Activated T-helper 1 cell treated with anti-CD3 and anti-CD28 coated beads, Interleukin-12 subunit alpha, Interleukin-12 subunit beta, Interleukin-2, Interleukin-4 antibody, amounts not matched to agents 30 ng/mL and 10 ng/mL and 1 ng/mL, durations not matched to agents 14 hours and 24 hours and 36 hours (primary cell): ENCODE measurements at regions of chr14 and their contacts with region 1.

Region 1: DNA sequence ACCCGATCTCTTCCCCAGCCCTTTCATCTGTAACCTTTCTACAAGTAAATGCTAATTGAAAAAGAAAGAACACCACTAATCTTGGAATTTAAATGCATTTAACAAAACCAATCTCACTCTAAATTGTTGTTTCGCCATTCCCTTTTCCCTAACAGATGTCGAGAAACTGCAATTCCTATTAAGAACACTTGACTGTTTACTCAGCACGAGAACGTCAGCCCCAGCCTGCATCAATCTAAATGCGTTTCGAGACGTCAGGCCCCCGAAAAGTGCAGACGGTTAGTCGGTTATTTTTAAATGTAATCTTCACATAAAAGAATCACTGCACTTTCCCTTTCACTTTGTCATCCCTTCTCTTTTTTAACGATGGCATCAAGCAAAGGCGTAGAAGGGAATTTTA is 837.6 kb downstream of the VRK1 start:
- DNase-seq: no peak
- H3K4me3 Mint-ChIP-seq: peak overlapping the region; percentile 86
- H3K27ac Mint-ChIP-seq: peak overlapping the region; percentile 49
- H3K4me1 Mint-ChIP-seq: peaks cover 53% of the 10 kb centered on the region
- H3K27me3 Mint-ChIP-seq: peaks cover 4% of the 10 kb centered on the region

Region 2: GRCh38 chr14:97177015-97177414 is 457.7 kb before region 1 on chr14:
- intact Hi-C with region 1: loop called (anchors 5 kb)
- DNase-seq: no peak
- H3K4me3 Mint-ChIP-seq: no peak overlapping the region
- H3K27ac Mint-ChIP-seq: no peak overlapping the region
- H3K4me1 Mint-ChIP-seq: peaks cover 18% of the 10 kb centered on the region
- H3K27me3 Mint-ChIP-seq: peaks cover 2% of the 10 kb centered on the region

Region 3: DNA sequence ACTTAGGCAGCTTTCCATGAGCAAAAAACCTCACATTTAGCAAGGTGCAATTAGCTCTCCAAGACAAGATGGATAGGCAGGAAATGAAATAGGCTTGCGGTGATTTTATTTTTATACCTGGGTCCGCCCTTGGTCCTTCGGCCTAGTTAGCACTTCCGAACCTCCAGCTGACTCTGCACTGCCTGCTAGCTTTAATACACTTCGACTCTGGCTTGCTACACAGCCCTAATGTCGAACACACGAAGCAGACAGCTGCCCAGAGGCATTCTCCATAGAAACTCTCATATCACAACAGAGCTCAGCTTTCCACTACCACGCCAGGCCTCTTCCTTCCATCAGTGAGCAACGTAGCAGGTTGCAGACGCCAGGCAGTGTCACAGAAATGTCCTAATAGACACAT is 149.6 kb before region 1 on chr14:
- intact Hi-C with region 1: no loop called
- DNase-seq: no peak
- H3K4me3 Mint-ChIP-seq: no peak overlapping the region
- H3K27ac Mint-ChIP-seq: no peak overlapping the region
- H3K4me1 Mint-ChIP-seq: peaks cover 11% of the 10 kb centered on the region
- H3K27me3 Mint-ChIP-seq: peaks cover 4% of the 10 kb centered on the region

Region 4: DNA sequence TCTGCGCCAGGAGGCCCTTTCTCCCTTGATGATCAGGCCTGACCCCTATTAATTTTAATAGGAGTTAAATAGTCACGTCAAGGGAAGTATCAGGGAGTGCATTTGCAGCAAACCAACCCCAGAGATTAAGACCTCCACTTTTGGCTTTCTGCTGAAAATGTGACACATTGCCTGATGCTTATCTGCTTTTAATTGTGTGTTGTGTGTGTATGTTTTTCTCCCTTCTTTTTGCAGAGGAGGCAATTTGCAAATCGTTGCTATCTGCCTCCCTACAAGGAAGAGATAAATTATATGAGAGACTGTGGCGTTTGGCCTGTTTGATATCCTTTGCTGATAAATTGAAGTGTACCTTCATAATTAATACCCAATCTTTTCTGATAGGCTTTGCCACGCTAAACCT is 14.7 kb before region 1 on chr14:
- intact Hi-C with region 1: loop called (anchors 2 kb)
- DNase-seq: no peak
- H3K4me3 Mint-ChIP-seq: peak overlapping the region; percentile 79
- H3K27ac Mint-ChIP-seq: peak overlapping the region; percentile 56
- H3K4me1 Mint-ChIP-seq: peaks cover 47% of the 10 kb centered on the region
- H3K27me3 Mint-ChIP-seq: peaks cover 4% of the 10 kb centered on the region

Region 5: DNA sequence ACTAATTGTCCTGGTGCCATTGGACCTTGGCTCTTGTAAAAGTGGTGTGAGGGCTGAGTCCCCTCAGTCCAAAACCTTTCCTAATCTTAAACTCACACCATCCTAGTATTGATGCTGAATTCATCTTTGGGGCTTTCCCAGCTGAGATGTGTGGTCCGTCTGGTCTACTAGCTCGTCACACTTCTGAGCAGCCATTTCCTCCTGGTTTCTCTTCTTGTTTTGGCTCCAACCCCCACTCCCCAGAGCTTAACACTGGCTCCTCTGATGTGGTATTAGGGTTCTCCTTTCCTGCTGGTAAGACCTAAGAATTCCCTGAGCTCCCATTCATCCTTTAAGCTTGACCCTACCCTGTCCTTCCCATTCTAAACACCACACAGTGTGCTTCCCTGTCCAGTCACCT is 63.0 kb after region 1 on chr14:
- intact Hi-C with region 1: loop called (anchors 2 kb)
- DNase-seq: peak; percentile 55
- H3K4me3 Mint-ChIP-seq: peak overlapping the region; percentile 66
- H3K27ac Mint-ChIP-seq: peak overlapping the region; percentile 85
- H3K4me1 Mint-ChIP-seq: peaks cover 55% of the 10 kb centered on the region
- H3K27me3 Mint-ChIP-seq: peaks cover 2% of the 10 kb centered on the region